ENCODE measurements at regions of chr16 and their contacts with region 1.

Region 1: DNA sequence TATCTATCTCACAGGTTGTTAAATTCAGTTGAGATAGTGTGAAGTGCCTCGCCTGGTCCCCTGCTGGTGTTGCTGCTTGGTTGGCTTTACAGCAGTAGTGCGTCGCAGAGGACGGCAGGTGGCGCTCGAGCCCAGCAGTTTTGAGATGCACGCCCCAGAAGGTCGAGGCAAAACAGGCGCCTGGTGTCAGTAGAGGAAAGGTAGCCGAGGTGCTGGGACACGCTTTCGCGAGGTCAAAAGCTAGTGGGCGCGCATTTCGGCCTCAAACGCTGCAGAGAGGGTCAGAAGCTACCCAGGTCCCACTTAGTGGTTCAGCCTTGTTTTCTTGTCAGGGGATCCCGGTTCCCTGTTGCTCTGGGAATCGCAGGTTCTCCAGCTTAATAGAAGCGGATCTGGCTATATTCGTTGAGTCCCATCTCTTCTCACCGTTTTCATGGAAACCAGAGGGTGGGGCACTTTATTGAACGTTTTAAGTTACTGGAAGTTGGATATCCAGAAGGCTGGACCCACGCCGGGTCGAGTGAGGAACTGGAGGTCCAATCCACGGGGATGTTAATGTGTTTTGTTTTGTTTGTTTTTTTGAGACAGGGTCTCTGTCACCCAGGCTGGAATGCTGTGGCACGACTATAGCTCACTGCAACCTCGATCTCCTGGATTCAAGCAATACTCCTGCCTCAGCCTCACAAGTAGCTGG is 10.3 kb upstream of the ZFP90 start:
- DNase-seq: peak; percentile 84
- H3K4me3 ChIP-seq: peak overlapping the region in 1 of 2 donors; percentile 9
- H3K27ac ChIP-seq: no peak overlapping the region
- H3K4me1 ChIP-seq: no peaks in the 10 kb centered on the region
- H3K27me3 ChIP-seq: no peaks in the 10 kb centered on the region
- CTCF ChIP-seq: peak; percentile 80 to 96 (median 90)
- POLR2A ChIP-seq: no peak

Region 2: DNA sequence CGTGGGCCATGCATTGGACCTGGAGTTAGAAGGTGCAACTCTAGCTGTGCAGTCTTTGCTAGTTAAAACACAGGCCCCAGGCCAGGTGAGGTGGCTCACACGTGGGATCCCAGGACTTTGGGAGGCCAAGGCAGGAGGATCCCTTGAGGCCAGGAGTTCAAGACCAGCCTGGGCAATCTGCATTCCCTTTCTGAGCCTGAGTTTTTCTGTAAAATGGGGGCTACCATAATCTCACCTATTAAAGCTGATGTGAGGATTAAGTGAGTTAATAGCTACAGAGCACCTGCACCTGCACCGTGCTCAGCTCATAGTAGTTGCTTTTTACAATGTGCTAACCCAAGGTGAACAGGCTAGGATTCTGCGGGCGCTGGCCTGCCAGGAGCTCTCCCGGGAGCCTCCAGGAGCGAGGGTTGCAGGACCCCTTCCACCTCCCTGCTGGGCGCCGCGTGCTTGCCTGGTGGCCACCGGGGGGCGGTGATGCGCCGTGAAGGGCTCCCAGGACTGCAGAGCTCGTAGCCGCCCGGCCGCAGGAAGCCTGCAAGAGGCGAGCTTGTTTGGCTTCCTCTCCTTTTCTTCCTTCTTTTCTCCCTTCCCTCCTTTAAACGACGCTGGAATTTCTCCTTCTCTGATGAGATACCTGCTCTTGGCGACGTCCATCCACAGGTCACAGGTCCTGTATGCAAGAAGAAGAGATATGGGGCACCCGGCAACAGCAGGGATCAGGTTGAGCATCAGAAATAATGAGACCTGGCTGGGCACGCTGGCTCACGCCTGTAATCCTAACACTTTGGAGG is 61.6 kb after region 1 on chr16:
- intact Hi-C with region 1: loop called (anchors 5 kb)
- DNase-seq: peak; percentile 63
- H3K4me3 ChIP-seq: no peak overlapping the region
- H3K27ac ChIP-seq: no peak overlapping the region
- H3K4me1 ChIP-seq: no peaks in the 10 kb centered on the region
- H3K27me3 ChIP-seq: no peaks in the 10 kb centered on the region
- CTCF ChIP-seq: peak; percentile 32 to 85 (median 68)
- POLR2A ChIP-seq: no peak

Region 3: GRCh38 chr16:68605746-68606145 is 76.9 kb after region 1 on chr16:
- intact Hi-C with region 1: no loop called
- DNase-seq: no peak
- H3K4me3 ChIP-seq: no peak overlapping the region
- H3K27ac ChIP-seq: no peak overlapping the region
- H3K4me1 ChIP-seq: no peaks in the 10 kb centered on the region
- H3K27me3 ChIP-seq: no peaks in the 10 kb centered on the region
- CTCF ChIP-seq: no peak
- POLR2A ChIP-seq: no peak

Region 4: GRCh38 chr16:68843482-68844210 is 314.8 kb after region 1 on chr16 and contains the start of gene TANGO6:
- intact Hi-C with region 1: loop called (anchors 10 kb)
- DNase-seq: peak; percentile 76
- H3K4me3 ChIP-seq: peak within 1 kb of the TSS; percentile 69 to 75
- H3K27ac ChIP-seq: peak within 1 kb of the TSS; percentile 83 to 84
- H3K4me1 ChIP-seq: peaks cover 2% of the 10 kb centered on the region
- H3K27me3 ChIP-seq: no peaks in the 10 kb centered on the region
- CTCF ChIP-seq: peak in 1 of 4 experiments; percentile 17
- POLR2A ChIP-seq: no peak
- total RNA-seq, gene TANGO6: 13.1 to 28.6 TPM

Measured in prostate gland (tissue), 2 donors.